BJ (cell line): ENCODE measurements at regions of chr11 and their contacts with region 1.

Region 1: DNA sequence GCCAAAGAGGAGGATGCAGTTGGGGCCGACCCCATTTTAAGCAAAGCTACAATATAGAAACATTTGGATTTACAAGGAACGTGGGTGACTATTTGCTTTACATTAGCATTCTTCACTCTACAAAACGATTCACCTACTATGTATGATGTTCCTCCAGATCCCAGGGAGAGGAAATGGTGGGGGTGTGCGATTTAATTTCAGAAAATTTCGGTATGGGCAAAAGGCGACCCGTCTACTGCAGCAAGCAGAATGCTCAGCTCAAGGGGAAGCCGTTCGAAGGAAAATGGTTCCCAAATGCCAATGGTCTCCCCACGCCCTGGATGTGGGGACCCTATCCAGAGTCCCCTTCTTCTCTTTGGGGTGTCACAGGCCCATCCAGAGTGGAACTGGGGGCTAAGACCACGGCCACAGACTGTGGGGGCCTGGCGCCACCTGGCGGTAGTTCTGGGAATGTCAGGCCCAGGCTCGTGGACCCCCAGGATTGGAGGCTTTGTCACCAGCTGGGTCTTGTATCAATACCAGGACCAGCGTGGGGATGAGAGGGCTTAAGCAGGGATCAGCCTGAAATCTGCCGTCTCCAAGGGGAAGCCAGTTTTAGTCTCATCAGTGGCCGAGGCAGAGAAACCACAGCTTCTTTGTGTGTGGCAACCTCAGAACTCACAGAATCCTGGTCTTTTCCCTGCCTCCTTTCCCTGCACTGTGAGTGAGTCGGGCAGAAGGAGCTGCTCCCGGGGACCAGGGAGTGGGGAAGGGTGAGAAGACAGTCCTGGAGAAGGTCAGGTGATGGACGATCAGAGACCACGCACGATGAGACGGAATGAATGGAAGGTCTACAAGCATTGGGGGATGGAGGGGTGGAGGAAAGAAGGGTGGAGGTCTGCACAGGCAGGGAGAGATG is 8.4 kb downstream of the LRRC10B start:
- DNase-seq: no peak
- H3K4me3 ChIP-seq: peak overlapping the region; percentile 5; the same call in 1 of the 2 replicates
- H3K27me3 ChIP-seq: peaks cover 7% of the 10 kb centered on the region; the same call in 1 of the 2 replicates
- CTCF ChIP-seq: peak; percentile 99

Region 2: DNA sequence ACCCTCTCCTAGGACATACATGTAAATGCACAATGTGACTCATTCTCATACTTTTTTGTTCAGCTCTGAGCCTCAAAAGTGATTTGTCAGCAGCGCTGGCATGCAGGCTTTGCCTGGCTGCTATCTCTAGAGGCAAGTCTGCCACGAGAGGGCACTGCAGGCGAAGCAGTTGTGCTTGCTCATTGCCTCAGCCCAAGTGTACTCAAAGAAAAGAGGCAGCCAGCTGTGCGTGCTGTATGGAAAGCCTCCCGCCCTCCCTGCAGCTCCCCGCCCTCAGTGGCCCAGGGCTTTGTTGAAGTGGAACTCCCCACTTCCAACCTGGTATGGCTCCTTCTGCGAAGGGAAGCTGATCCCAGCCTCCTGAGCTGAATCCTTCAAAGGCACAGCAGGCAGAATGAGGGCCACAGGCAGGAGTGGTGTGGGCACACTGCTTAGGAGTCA is 70.7 kb before region 1 on chr11:
- CTCF ChIA-PET with region 1: interaction called, 200 read pairs
- POLR2A ChIA-PET with region 1: no interaction called
- DNase-seq: peak; percentile 82
- H3K4me3 ChIP-seq: no peak overlapping the region
- H3K27me3 ChIP-seq: no peaks in the 10 kb centered on the region
- CTCF ChIP-seq: peak; percentile 97

Region 3: DNA sequence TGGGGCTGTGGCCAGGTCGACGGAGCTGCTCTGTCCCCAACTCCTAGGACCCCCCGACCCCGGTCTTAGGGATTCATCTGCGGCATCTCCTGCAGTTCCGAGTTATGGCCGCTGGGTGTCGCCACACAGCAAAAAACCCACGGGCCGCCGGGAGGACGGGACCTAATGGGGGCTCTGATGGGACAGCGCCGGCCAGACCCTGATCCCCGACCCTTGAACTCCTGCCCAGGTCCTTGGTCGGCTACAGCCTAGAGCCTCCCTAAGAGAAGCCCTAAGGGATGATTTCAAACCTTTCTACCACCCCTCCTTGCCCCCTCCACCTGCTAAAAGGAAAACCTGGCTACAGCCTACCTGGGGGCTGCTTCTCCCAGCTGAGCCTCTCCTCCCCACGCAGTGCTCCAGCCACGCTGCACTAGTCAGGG is 39.2 kb before region 1 on chr11:
- CTCF ChIA-PET with region 1: interaction called, 156 read pairs
- POLR2A ChIA-PET with region 1: interaction called, 3 read pairs
- DNase-seq: no peak
- H3K4me3 ChIP-seq: no peak overlapping the region
- H3K27me3 ChIP-seq: peaks cover 1% of the 10 kb centered on the region
- CTCF ChIP-seq: peak; percentile 90

Region 4: DNA sequence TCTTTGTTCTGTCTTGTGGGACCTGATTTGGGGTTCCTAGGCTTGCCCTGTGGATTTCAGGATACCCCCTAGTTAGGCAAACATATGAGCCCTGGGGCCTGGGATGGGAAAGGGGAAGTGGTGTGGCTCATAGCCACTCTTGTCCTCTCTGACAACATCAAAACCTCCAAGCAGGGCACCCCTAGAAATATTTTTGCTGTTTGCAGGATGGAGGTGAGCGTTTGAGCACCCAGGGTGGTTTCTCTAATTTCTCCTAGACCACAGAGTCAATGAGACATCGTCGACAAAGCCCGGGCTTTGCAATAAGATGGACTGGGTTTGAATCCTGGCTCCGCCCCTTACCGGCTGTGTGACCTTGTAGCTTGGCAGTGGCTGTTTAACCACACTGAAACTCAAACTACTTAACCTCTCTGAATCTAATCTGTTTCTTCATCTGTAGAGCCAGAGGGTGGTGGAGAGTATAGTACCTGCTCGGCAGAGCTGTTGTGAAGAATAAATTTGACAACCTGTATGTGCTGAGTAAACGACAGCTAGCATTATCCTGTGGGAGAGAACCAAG is 13.6 kb before region 1 on chr11:
- CTCF ChIA-PET with region 1: interaction called, 31 read pairs
- POLR2A ChIA-PET with region 1: no interaction called
- DNase-seq: no peak
- H3K4me3 ChIP-seq: no peak overlapping the region
- H3K27me3 ChIP-seq: peaks cover 22% of the 10 kb centered on the region
- CTCF ChIP-seq: no peak

Region 5: DNA sequence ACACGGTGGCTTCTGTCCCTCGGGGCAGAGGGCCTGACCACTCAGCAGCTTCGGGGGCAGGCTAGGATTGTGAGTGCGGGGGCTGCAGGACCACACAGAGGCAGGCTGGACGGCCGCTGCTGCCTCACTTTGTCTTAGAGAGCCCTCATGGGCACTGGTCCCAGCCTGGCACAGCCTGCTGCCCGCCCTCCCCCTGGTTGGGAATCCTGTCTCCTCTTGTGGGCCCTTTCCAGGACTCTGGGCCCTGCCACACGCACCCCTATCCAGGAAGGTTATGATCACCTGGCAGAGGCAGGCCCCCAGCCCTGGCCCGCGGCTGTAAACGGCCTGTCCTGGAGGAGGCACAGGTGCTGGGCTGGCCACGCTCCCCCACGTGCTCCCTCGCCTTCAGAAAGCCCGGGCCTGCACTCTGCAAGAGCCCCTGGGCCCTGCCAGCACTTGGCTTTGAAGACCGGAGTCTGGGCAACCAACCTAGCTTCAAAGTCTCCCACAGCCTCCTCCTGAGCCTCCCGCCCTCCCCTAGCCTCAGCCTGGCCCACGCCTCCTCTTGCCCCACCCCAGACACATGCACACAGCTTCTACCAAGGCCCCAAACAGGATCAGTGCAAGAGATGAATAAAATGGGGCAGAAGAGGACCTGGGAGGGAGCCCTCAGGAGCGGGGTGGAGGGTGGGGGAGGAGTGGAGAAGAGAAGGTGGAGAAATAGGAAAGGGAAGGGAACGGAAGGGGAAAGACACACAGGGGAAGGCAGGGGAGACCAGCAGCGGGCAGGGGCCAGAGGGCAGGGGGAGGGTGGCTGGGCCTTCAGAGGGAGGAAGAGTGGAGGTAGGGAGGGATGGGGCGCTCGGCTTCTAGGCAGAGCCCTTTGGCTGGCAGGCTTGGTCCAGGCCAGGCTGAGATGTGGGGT is 33.0 kb after region 1 on chr11:
- CTCF ChIA-PET with region 1: interaction called, 27 read pairs
- POLR2A ChIA-PET with region 1: no interaction called
- DNase-seq: no peak
- H3K4me3 ChIP-seq: no peak overlapping the region
- H3K27me3 ChIP-seq: peaks cover 15% of the 10 kb centered on the region
- CTCF ChIP-seq: no peak

Region 6: DNA sequence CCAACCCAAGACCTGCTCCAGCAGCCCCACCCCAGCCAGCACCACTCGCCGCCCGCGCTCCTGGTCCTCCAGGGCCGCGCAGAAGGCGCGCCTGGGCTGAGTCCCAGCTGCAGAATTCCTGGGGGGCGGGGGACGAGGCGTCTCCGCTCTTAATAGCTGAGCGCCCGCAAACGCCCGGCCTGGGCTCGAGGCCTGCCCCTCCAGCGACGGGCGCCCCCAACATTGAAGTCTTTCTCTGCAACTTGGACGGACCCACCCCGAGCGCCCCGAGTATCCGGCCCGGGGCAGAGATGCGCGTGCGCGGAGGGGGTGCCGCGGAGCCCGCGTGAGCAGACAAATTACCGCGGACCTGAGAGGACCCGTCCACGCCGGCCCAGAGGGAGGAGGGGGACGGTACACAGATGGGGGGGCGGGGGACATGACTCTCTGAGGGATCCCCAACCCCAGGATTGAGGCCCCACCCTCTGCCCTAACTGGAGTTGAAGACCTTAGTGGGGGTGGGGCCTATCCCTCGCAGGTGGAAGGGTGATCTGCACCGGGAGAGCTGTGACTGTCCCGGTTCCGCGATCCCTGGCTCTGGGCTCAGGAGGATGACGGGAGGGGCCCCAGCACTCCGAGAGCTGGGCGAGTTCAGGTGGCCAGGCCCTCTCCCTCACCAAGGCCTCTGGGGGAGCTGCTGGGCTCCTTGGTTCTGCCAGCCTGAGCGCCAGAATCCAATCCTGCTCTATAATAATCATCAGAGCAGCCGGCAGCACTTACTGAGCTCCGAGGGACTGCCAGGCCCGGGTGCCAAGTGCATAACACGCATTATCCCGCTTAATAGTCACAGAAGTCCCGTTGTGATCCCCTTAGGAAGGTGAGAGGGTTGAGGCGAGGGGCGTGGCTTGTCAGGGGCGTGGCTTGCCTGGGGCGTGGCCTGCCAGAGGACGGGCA is 70.9 kb after region 1 on chr11:
- CTCF ChIA-PET with region 1: interaction called, 10 read pairs
- POLR2A ChIA-PET with region 1: no interaction called
- DNase-seq: no peak
- H3K4me3 ChIP-seq: peak overlapping the region; percentile 39
- H3K27me3 ChIP-seq: peaks cover 27% of the 10 kb centered on the region
- CTCF ChIP-seq: peak; percentile 30

Region 7: GRCh38 chr11:61645179-61645868 is 128.4 kb after region 1 on chr11:
- CTCF ChIA-PET with region 1: interaction called, 12 read pairs
- POLR2A ChIA-PET with region 1: no interaction called
- DNase-seq: no peak
- H3K4me3 ChIP-seq: no peak overlapping the region
- H3K27me3 ChIP-seq: no peaks in the 10 kb centered on the region
- CTCF ChIP-seq: no peak

Region 8: GRCh38 chr11:62542750-62543567 is 1026.0 kb after region 1 on chr11:
- CTCF ChIA-PET with region 1: no interaction called
- POLR2A ChIA-PET with region 1: no interaction called
- DNase-seq: no peak
- H3K4me3 ChIP-seq: peak overlapping the region; percentile 96
- H3K27me3 ChIP-seq: no peaks in the 10 kb centered on the region
- CTCF ChIP-seq: peak; percentile 100